ENCODE measurements at regions of chr11 and their contacts with region 1.

Region 1: GRCh38 chr11:18115360-18116127 is 9.7 kb upstream of the SAAL1 start:
- DNase-seq: peak; percentile 45 to 75 (median 57)
- H3K4me3 ChIP-seq: no peak overlapping the region
- H3K4me3 Mint-ChIP-seq: no peak overlapping the region
- H3K27ac ChIP-seq: no peak overlapping the region
- H3K27ac Mint-ChIP-seq: peak overlapping the region in 1 of 8 donors; percentile 5
- H3K4me1 ChIP-seq: no peaks in the 10 kb centered on the region
- H3K4me1 Mint-ChIP-seq: peaks cover 3 to 5% (median 5%) of the 10 kb centered on the region in 3 donors
- H3K27me3 ChIP-seq: peaks cover 4% of the 10 kb centered on the region
- H3K27me3 Mint-ChIP-seq: peaks cover 16 to 37% of the 10 kb centered on the region in 2 donors

Region 2: DNA sequence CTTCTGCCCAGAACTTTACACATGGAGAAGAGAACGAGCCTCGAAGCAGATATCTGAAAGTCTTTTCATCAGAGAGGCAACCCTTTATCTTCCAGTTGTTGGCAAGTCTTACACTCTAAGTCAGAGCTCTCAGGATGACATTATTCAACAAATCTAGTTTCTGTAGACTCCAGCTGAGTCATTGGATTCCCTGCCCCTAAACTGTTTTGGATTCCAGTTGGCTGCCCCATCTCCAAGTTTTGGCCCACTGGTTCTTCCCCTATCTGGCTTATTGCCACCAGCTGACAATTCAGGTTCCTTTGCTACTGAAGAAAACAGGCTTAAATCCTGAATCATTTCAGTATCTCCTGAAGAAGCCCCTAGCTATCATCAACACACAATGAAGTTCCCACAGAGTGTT is 23.8 kb before region 1 on chr11:
- CTCF ChIA-PET with region 1: interaction called, 12 read pairs
- POLR2A ChIA-PET with region 1: no interaction called
- DNase-seq: no peak
- H3K4me3 ChIP-seq: no peak overlapping the region
- H3K4me3 Mint-ChIP-seq: no peak overlapping the region
- H3K27ac ChIP-seq: no peak overlapping the region
- H3K27ac Mint-ChIP-seq: peak overlapping the region in 1 of 8 donors; percentile 53
- H3K4me1 ChIP-seq: no peaks in the 10 kb centered on the region
- H3K4me1 Mint-ChIP-seq: peaks cover 0 to 3% (median 0%) of the 10 kb centered on the region in 3 donors
- H3K27me3 ChIP-seq: no peaks in the 10 kb centered on the region
- H3K27me3 Mint-ChIP-seq: no peaks in the 10 kb centered on the region

Region 3: GRCh38 chr11:18761741-18762140 is 646.2 kb after region 1 on chr11:
- CTCF ChIA-PET with region 1: interaction called, 11 read pairs
- POLR2A ChIA-PET with region 1: no interaction called
- DNase-seq: no peak
- H3K4me3 ChIP-seq: no peak overlapping the region
- H3K4me3 Mint-ChIP-seq: no peak overlapping the region
- H3K27ac ChIP-seq: no peak overlapping the region
- H3K27ac Mint-ChIP-seq: no peak overlapping the region
- H3K4me1 ChIP-seq: no peaks in the 10 kb centered on the region
- H3K4me1 Mint-ChIP-seq: peaks cover 4 to 6% (median 6%) of the 10 kb centered on the region in 3 donors
- H3K27me3 ChIP-seq: no peaks in the 10 kb centered on the region
- H3K27me3 Mint-ChIP-seq: peaks cover 2 to 10% of the 10 kb centered on the region in 2 donors

Measured in CD8-positive, alpha-beta memory T cell (primary cell).